ENCODE measurements at regions of chr3 and their contacts with region 1.

Region 1: GRCh38 chr3:17258823-17259436 is 374.2 kb downstream of the PLCL2 start:
- DNase-seq: no peak
- ATAC-seq: no peak

Region 2: GRCh38 chr3:17290894-17291293 is 32.0 kb after region 1 on chr3:
- intact Hi-C with region 1: no loop called
- DNase-seq: no peak
- ATAC-seq: no peak

Region 3: GRCh38 chr3:17302774-17303173 is 43.8 kb after region 1 on chr3:
- intact Hi-C with region 1: no loop called
- DNase-seq: no peak
- ATAC-seq: peak; percentile 28

Region 4: GRCh38 chr3:17412950-17413530 is 154.1 kb after region 1 on chr3:
- intact Hi-C with region 1: loop called (anchors 1 kb)
- DNase-seq: no peak
- ATAC-seq: no peak

Region 5: DNA sequence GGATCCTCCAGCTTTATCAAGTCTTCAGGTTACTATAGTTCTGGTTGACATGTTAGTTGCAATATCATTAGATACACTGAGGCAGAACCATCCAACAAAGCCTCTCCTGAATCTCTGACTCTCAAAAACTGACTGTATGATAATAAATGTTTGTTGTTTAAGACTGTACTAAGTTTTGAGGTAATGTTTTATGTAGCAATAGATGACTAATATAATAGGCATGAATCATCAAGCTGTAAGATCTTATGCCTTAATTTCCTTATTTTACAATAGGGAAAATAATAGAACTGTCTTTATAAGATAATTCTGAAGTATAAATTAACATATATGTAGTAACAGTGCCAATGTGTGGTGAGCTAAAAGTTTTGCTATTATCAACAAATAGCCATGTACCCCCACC is 572.4 kb after region 1 on chr3:
- intact Hi-C with region 1: loop called (anchors 10 kb)
- DNase-seq: no peak
- ATAC-seq: no peak